ENCODE measurements at regions of chr6 and their contacts with region 1.

Region 1: GRCh38 chr6:121055572-121056163 is 278.6 kb downstream of the TBC1D32 start:
- DNase-seq: no peak
- H3K4me3 Mint-ChIP-seq: no peak overlapping the region
- H3K27ac Mint-ChIP-seq: no peak overlapping the region
- H3K4me1 Mint-ChIP-seq: no peaks in the 10 kb centered on the region
- H3K27me3 Mint-ChIP-seq: no peaks in the 10 kb centered on the region

Region 2: DNA sequence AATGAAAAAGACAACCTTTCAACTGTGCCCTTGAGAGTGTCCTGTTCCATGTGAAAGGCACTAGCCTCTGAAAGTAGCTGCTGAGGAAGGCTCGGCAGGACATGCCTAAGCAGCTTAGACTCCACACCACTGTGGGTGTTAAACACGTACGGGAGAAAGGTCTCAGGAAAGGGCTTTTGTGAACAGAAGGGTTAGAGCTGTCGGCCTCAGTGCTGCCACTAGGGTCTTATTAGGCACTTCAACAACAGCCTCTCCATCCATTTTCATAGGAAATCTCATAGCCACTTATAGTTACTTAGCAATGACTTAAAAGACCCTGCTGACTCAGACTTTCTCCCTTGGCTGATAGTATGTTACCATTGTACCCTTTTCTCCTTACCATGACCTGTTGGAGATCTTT is 384.1 kb before region 1 on chr6:
- CTCF ChIA-PET with region 1: no interaction called
- POLR2A ChIA-PET with region 1: no interaction called
- intact Hi-C with region 1: no loop called
- DNase-seq: no peak
- H3K4me3 Mint-ChIP-seq: no peak overlapping the region
- H3K27ac Mint-ChIP-seq: no peak overlapping the region
- H3K4me1 Mint-ChIP-seq: no peaks in the 10 kb centered on the region
- H3K27me3 Mint-ChIP-seq: no peaks in the 10 kb centered on the region

Region 3: GRCh38 chr6:120981835-120982234 is 73.8 kb before region 1 on chr6:
- CTCF ChIA-PET with region 1: no interaction called
- POLR2A ChIA-PET with region 1: no interaction called
- intact Hi-C with region 1: no loop called
- DNase-seq: no peak
- H3K4me3 Mint-ChIP-seq: no peak overlapping the region
- H3K27ac Mint-ChIP-seq: no peak overlapping the region
- H3K4me1 Mint-ChIP-seq: no peaks in the 10 kb centered on the region
- H3K27me3 Mint-ChIP-seq: no peaks in the 10 kb centered on the region

Region 4: GRCh38 chr6:121305957-121306607 is 250.4 kb after region 1 on chr6:
- CTCF ChIA-PET with region 1: interaction called, 35 read pairs
- POLR2A ChIA-PET with region 1: no interaction called
- intact Hi-C with region 1: loop called (anchors 1 kb)
- DNase-seq: no peak
- H3K4me3 Mint-ChIP-seq: no peak overlapping the region
- H3K27ac Mint-ChIP-seq: no peak overlapping the region
- H3K4me1 Mint-ChIP-seq: peaks cover 4% of the 10 kb centered on the region
- H3K27me3 Mint-ChIP-seq: no peaks in the 10 kb centered on the region

Region 5: DNA sequence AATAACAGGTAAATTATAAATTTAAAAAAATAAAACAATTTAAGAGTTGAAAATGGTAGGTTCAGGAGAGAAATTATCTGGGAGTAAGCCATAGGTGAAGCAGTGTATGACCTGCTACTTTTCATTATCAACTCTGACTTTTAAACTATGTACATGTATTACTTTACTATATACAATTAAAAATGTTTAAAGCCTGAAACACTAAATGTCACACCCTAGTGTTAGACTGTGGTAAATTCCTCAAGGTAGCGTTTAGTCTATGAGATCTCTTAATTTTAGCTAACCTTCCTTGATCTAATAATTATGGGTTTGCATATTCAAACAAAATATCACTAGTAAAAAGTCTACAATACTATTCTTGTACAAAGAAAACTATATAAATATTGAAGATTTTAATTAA is 300.9 kb after region 1 on chr6:
- CTCF ChIA-PET with region 1: no interaction called
- POLR2A ChIA-PET with region 1: no interaction called
- intact Hi-C with region 1: loop called (anchors 1 kb)
- DNase-seq: no peak
- H3K4me3 Mint-ChIP-seq: no peak overlapping the region
- H3K27ac Mint-ChIP-seq: no peak overlapping the region
- H3K4me1 Mint-ChIP-seq: no peaks in the 10 kb centered on the region
- H3K27me3 Mint-ChIP-seq: peaks cover 23% of the 10 kb centered on the region

Region 6: DNA sequence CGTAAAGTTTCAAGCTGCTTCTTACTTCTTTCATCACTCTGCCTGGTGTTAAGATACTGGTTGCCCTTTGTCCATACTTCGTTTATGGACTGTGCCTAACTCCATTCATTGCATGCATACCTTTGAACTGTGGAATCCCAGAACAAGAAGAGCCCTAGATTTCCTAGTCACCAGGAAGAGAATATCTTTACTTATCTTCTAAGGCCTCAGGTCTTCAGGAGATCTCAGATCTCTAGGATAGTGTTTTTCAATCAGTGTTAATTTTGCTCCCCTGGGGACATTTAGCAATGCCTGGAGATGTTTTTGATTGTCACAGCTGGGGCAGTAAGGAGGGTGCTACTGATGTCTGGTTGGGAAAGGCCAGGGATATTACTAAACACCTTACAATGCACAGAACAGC is 344.3 kb after region 1 on chr6:
- CTCF ChIA-PET with region 1: no interaction called
- POLR2A ChIA-PET with region 1: no interaction called
- intact Hi-C with region 1: loop called (anchors 2 kb)
- DNase-seq: no peak
- H3K4me3 Mint-ChIP-seq: no peak overlapping the region
- H3K27ac Mint-ChIP-seq: no peak overlapping the region
- H3K4me1 Mint-ChIP-seq: no peaks in the 10 kb centered on the region
- H3K27me3 Mint-ChIP-seq: no peaks in the 10 kb centered on the region

Region 7: GRCh38 chr6:121686611-121687023 is 630.9 kb after region 1 on chr6:
- CTCF ChIA-PET with region 1: no interaction called
- POLR2A ChIA-PET with region 1: no interaction called
- intact Hi-C with region 1: no loop called
- DNase-seq: no peak
- H3K4me3 Mint-ChIP-seq: no peak overlapping the region
- H3K27ac Mint-ChIP-seq: no peak overlapping the region
- H3K4me1 Mint-ChIP-seq: no peaks in the 10 kb centered on the region
- H3K27me3 Mint-ChIP-seq: no peaks in the 10 kb centered on the region

Region 8: DNA sequence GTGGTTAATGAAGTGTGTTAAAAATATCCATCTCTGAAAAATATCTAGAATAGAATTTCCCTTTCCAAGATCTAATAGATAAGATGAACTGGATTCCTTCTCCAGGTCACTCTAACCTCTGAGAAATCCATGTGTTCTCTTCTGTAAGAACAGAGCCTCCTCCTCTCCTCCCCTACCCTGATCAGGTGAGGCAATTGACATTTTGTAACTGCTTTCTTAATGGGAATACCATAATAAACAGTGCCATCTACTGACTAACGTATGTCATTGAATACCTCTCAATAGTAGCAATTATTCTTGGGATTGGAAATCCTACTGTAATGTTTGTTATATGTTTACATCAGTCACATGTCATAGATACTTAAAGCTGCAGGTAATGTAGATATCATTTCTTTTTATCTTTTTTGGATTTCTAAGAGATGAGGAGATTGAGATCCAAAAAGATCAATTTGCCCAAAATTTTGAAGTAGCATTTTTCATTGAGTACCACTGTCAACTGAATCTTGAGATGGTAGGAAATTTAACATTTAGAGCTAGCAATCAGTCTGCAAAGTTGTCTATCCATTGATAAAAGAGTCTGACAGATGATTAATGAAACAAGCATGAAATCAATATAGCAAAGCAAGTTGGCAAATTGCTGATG is 978.0 kb after region 1 on chr6:
- CTCF ChIA-PET with region 1: interaction called, 13 read pairs
- POLR2A ChIA-PET with region 1: no interaction called
- intact Hi-C with region 1: loop called (anchors 1 kb)
- DNase-seq: no peak
- H3K4me3 Mint-ChIP-seq: no peak overlapping the region
- H3K27ac Mint-ChIP-seq: no peak overlapping the region
- H3K4me1 Mint-ChIP-seq: no peaks in the 10 kb centered on the region
- H3K27me3 Mint-ChIP-seq: peaks cover 5% of the 10 kb centered on the region